ENCODE measurements at regions of chr5 and their contacts with region 1.

Region 1: DNA sequence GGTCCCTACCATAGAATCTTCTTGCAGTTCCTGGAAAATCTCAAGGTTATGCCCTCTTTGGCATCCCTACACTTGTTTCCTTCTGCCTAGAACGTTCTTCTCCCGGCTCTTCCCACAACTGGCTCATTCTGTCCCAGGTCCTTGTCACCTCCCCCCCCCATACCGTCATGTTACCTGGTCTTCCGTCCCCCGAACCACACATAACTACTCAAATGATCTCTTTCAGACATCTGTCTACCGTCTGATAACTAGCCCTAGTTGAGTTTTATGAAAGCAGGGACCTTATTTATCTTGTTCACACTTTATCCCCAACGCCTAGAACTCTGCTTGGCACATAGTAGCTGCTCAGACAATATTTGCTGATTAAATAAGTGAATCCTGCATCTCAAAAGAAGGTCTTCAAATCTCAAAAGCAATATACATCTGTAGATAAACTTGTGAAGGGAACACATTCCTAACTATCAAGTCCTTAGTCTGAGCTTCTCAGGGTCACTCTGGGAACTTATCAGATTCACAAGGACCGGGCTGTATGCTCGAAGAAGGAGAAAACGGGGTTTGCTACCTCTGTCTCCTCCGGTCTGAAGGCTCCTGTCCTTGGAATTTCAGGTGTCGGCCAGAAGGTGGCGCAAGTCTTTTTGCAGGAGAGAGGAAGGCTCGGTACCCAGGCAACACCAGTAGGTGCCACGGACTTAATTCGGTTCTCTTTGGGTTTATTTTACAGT is 30.0 kb downstream of the LCP2 start:
- DNase-seq: peak; percentile 66
- H3K4me3 Mint-ChIP-seq: peak overlapping the region; percentile 77
- H3K27ac Mint-ChIP-seq: peak overlapping the region; percentile 90
- H3K4me1 Mint-ChIP-seq: peaks cover 91% of the 10 kb centered on the region
- H3K27me3 Mint-ChIP-seq: no peaks in the 10 kb centered on the region

Region 2: DNA sequence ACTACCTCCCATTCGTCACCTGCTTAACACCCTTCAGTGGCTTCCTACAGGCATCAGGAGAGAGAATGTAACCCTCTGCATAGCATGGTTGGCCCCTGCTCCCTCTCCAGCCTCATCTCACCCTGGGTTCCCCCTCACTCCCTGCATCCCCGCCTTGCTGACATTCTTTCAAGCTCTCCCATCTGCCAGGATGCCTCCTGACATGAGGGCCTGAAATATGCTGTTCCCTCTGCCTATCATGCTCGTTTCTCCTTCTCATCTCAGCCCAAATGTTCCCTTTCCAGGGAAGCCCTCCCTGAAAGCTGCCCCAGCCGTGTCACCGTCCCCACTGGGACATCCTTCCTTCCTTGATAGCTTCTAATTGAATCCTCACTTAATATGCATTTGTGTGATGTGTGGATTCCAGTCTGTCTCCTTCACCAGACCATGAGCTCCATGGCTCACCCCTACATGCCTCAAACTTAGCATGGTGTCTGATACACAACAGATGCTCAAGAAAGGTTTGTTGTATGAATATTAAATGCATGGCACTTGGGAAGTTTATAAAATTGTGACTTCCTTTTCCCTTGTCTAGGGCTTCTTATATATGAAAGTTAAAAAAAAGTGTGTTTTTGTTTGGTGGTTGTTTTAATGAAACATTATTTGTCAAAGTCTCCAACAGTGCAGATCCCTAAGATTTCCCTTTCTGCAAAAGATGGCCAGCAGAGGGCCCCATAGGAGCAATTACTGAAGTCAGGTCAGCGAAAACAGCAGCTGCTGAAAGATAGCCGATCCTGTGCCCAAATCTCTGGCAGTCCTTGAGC is 42.1 kb before region 1 on chr5:
- intact Hi-C with region 1: loop called (anchors 1 kb)
- DNase-seq: peak; percentile 62
- H3K4me3 Mint-ChIP-seq: no peak overlapping the region
- H3K27ac Mint-ChIP-seq: peak overlapping the region; percentile 55
- H3K4me1 Mint-ChIP-seq: peaks cover 5% of the 10 kb centered on the region
- H3K27me3 Mint-ChIP-seq: peaks cover 2% of the 10 kb centered on the region

Region 3: GRCh38 chr5:170253844-170254455 is 13.6 kb before region 1 on chr5:
- intact Hi-C with region 1: loop called (anchors 1 kb)
- DNase-seq: peak; percentile 68
- H3K4me3 Mint-ChIP-seq: peak overlapping the region; percentile 13
- H3K27ac Mint-ChIP-seq: peak overlapping the region; percentile 66
- H3K4me1 Mint-ChIP-seq: peaks cover 62% of the 10 kb centered on the region
- H3K27me3 Mint-ChIP-seq: no peaks in the 10 kb centered on the region

Region 4: DNA sequence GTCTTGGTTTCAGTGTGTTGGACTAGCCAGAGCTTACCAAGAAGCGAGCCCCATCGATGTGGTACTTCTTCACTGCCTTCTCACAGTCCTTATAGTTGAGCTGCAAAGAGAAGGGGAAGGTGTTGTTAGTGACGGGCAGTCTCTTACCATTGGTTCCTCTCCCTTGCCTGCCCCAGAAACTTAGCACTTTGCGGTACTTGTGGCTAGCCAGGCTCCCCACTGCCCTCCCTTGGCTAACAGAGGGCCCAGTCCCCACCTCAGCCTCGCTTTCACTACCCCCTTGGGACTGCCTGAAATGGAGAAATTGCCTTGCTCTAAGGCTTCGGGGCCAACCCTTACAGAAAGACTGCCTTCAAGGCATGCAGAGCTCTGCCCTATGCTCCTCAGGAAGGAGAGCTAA is 25.7 kb after region 1 on chr5:
- intact Hi-C with region 1: loop called (anchors 1 kb)
- DNase-seq: no peak
- H3K4me3 Mint-ChIP-seq: peak overlapping the region; percentile 99
- H3K27ac Mint-ChIP-seq: peak overlapping the region; percentile 87
- H3K4me1 Mint-ChIP-seq: peaks cover 79% of the 10 kb centered on the region
- H3K27me3 Mint-ChIP-seq: no peaks in the 10 kb centered on the region

Region 5: DNA sequence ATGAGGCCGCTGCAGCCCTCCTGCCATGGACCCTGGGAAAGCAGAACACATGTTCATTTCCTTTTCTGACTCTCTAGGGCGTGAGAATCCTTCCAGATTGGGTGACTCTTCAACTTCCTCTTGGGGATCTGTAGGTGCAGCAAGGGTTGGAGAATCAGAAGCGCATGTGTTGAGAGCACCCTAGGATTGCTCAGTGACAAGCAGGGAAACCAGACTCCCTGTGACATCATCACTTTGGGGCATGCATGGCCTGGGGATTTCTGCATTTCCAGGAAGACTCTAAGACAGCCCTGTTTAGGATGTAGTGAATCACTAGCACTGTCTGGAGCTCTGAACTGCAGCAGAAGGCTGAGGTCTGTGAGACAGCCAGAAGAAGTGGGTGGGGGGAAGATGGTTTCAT is 45.1 kb after region 1 on chr5:
- intact Hi-C with region 1: loop called (anchors 1 kb)
- DNase-seq: peak; percentile 61
- H3K4me3 Mint-ChIP-seq: peak overlapping the region; percentile 80
- H3K27ac Mint-ChIP-seq: peak overlapping the region; percentile 91
- H3K4me1 Mint-ChIP-seq: peaks cover 54% of the 10 kb centered on the region
- H3K27me3 Mint-ChIP-seq: no peaks in the 10 kb centered on the region

Region 6: GRCh38 chr5:170338933-170339779 is 71.6 kb after region 1 on chr5:
- intact Hi-C with region 1: loop called (anchors 1 kb)
- DNase-seq: peak; percentile 45
- H3K4me3 Mint-ChIP-seq: no peak overlapping the region
- H3K27ac Mint-ChIP-seq: peak overlapping the region; percentile 63
- H3K4me1 Mint-ChIP-seq: peaks cover 20% of the 10 kb centered on the region
- H3K27me3 Mint-ChIP-seq: peaks cover 4% of the 10 kb centered on the region

Region 7: DNA sequence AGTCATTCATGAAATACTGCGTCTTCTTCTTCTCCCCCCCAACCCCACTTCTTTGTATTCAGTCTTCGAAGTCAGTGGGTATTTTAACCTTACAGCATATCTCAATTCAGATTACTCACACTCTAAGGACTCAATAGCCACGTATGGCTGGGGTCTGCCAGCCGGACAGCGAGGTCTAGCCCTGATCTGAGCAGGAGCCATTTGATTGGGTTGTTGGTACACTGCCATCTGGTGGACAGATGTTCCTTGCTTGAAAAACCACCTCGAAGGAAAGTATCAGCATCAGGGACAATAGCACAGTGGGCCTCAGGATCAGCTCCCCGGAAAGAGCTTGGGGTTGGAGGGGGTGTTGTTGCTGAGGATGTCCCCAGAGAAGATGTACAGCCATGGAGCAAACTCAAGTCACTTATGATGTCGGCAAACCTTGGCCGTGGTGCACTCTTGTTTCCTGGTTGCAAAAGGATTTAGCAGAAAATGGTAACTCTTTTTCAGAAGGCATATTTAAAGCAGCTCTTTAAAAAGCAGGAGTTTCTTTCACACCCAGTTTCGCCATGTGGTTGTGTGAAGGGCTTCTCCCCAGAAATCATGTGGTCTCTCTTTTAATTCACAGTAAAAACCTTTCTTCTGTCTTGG is 153.3 kb after region 1 on chr5:
- intact Hi-C with region 1: loop called (anchors 2 kb)
- DNase-seq: peak; percentile 20
- H3K4me3 Mint-ChIP-seq: no peak overlapping the region
- H3K27ac Mint-ChIP-seq: no peak overlapping the region
- H3K4me1 Mint-ChIP-seq: no peaks in the 10 kb centered on the region
- H3K27me3 Mint-ChIP-seq: peaks cover 25% of the 10 kb centered on the region

Region 8: DNA sequence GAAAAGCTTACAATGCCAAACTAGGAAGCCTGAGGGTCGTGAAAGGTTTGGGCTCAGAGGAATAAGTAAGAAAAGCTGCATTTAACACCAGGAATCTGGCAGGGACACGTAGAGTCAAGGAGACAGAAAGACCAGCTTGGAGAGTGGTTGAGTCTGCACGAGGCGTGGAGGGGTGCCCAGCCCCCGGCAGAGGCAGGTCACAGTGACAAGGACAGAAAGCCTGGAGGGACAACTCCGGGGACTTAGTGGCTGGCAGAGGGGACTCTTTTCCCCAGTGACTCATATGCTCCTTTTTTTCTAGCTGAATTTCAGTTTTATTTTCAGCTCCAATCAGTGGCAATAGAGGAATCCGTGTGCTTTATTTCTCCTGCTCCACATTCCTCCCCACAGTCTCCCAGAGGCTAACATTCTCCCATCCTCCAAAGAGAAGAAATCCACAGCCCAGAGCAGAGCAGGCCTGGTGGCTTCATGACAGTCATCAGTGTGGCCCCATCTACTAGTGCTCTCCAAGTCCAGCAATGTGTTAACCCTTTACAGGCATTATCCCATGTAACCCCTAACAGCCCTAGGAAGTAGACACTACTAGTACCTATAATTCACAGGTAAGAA is 317.0 kb after region 1 on chr5:
- intact Hi-C with region 1: no loop called
- DNase-seq: no peak
- H3K4me3 Mint-ChIP-seq: no peak overlapping the region
- H3K27ac Mint-ChIP-seq: no peak overlapping the region
- H3K4me1 Mint-ChIP-seq: no peaks in the 10 kb centered on the region
- H3K27me3 Mint-ChIP-seq: peaks cover 9% of the 10 kb centered on the region

Region 9: DNA sequence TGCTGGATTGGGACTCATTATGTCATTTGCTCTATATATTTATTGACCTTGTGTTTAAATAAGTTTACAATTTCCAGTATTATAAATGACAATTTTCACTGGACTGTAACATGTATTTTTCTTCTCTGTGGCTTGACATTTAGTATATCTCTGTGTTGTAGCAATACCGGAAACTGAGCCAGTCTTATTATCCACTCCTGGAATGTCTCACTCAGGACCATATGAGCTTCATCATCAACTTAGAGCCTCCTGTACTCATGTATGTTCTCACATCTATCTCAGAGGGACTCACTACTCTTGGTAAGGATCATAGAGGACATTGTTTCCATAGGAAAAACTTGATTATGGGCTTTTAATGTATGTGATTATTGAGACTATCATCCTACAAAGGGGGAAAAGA is 974.9 kb after region 1 on chr5:
- intact Hi-C with region 1: no loop called
- DNase-seq: no peak
- H3K4me3 Mint-ChIP-seq: no peak overlapping the region
- H3K27ac Mint-ChIP-seq: no peak overlapping the region
- H3K4me1 Mint-ChIP-seq: no peaks in the 10 kb centered on the region
- H3K27me3 Mint-ChIP-seq: peaks cover 4% of the 10 kb centered on the region

Measured in activated T-helper 1 cell treated with anti-CD3 and anti-CD28 coated beads, Interleukin-12 subunit alpha, Interleukin-12 subunit beta, Interleukin-2, Interleukin-4 antibody, amounts not matched to agents 30 ng/mL and 10 ng/mL and 1 ng/mL, durations not matched to agents 14 hours and 24 hours and 36 hours (primary cell).